Heart right ventricle (tissue), 16 donors: ENCODE measurements at regions of chr2 and their contacts with region 1.

Region 1: DNA sequence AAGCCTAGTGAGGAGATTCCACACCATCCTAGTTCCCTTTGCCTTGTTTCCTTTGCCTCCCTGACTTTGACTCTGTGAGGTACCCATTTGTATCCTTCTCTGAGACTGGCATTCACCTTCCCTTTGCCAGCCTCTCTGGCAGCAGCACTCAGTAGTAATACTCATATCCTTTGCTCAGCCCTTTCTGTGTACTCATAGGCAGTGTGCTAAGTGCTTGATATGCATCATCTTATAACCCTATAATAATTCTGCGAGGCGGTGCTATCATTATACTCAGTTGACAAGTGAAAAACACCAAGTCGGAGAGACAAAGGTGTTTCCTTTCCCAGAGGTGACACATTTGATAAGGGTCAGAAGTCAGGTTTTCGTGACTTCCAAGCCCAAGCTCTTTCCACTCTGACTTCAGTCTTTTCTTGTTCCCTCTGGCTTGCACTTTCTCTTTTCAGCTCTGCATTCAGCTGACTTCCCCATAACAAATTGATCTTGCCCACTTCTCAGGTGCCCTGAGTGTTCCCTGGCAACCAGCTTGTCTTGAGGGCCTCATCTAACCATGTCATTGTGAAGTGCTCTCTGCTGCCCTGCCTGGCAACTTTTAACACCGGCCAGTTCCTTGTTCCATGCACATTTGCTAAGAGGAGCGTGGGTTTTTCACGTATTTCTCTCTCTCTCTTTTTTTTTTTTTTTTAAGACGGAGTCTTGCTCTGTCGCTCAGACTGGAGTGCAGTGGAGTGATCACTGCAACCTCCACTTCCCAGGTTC is 94.5 kb upstream of the UPP2 start:
- DNase-seq: no peak
- ATAC-seq: peak in 1 of 8 donors; percentile 74
- H3K4me3 ChIP-seq: no peak overlapping the region
- H3K27ac ChIP-seq: no peak overlapping the region
- H3K4me1 ChIP-seq: peaks cover 0 to 10% (median 3%) of the 10 kb centered on the region in 9 donors
- H3K27me3 ChIP-seq: no peaks in the 10 kb centered on the region
- CTCF ChIP-seq: peak in 1 of 9 donors; percentile 22

Region 2: GRCh38 chr2:157327621-157328500 is 679.3 kb before region 1 on chr2:
- intact Hi-C with region 1: loop called in 2 of 10 experiments (anchors 10 kb)
- DNase-seq: peak; percentile 79
- ATAC-seq: peak; percentile 61 to 96 (median 91)
- H3K4me3 ChIP-seq: no peak overlapping the region
- H3K27ac ChIP-seq: no peak overlapping the region
- H3K4me1 ChIP-seq: peaks cover 0 to 12% (median 7%) of the 10 kb centered on the region in 9 donors
- H3K27me3 ChIP-seq: no peaks in the 10 kb centered on the region
- CTCF ChIP-seq: peak; percentile 70 to 97 (median 88)

Region 3: GRCh38 chr2:157497638-157498314 is 509.4 kb before region 1 on chr2:
- intact Hi-C with region 1: loop called in 7 of 10 experiments (anchors 2 to 5 kb)
- DNase-seq: no peak
- ATAC-seq: peak in 3 of 8 donors; percentile 49 to 61 (median 56)
- H3K4me3 ChIP-seq: no peak overlapping the region
- H3K27ac ChIP-seq: no peak overlapping the region
- H3K4me1 ChIP-seq: no peaks in the 10 kb centered on the region
- H3K27me3 ChIP-seq: no peaks in the 10 kb centered on the region
- CTCF ChIP-seq: peak; percentile 21 to 69 (median 58)

Region 4: GRCh38 chr2:157784169-157784822 is 222.8 kb before region 1 on chr2:
- intact Hi-C with region 1: loop called in 3 of 10 experiments (anchors 2 to 5 kb)
- DNase-seq: peak; percentile 25 to 34
- ATAC-seq: peak; percentile 65 to 83 (median 75)
- H3K4me3 ChIP-seq: peak overlapping the region in 4 of 10 donors; percentile 2 to 23 (median 12)
- H3K27ac ChIP-seq: peak overlapping the region in 9 of 10 donors; percentile 22 to 68 (median 59)
- H3K4me1 ChIP-seq: peaks cover 8 to 82% (median 72%) of the 10 kb centered on the region in 9 donors
- H3K27me3 ChIP-seq: no peaks in the 10 kb centered on the region
- CTCF ChIP-seq: no peak

Region 5: GRCh38 chr2:157898591-157898996 is 108.5 kb before region 1 on chr2:
- intact Hi-C with region 1: loop called in 1 of 10 experiments (anchors 10 kb)
- DNase-seq: no peak
- ATAC-seq: peak in 5 of 8 donors; percentile 52 to 89 (median 69)
- H3K4me3 ChIP-seq: no peak overlapping the region
- H3K27ac ChIP-seq: peak overlapping the region in 1 of 10 donors; percentile 76
- H3K4me1 ChIP-seq: peaks cover 0 to 24% (median 5%) of the 10 kb centered on the region in 9 donors
- H3K27me3 ChIP-seq: no peaks in the 10 kb centered on the region
- CTCF ChIP-seq: no peak